Activated T-helper 2 cell treated with anti-CD3 and anti-CD28 coated beads, Interferon-gamma antibody, Interleukin-2, Interleukin-4, amounts not matched to agents 10 μg/mL and 5 μg/mL and 100 μg/mL, durations not matched to agents 14 hours and 24 hours and 36 hours (primary cell): ENCODE measurements at regions of chr15 and their contacts with region 1.

Region 1: DNA sequence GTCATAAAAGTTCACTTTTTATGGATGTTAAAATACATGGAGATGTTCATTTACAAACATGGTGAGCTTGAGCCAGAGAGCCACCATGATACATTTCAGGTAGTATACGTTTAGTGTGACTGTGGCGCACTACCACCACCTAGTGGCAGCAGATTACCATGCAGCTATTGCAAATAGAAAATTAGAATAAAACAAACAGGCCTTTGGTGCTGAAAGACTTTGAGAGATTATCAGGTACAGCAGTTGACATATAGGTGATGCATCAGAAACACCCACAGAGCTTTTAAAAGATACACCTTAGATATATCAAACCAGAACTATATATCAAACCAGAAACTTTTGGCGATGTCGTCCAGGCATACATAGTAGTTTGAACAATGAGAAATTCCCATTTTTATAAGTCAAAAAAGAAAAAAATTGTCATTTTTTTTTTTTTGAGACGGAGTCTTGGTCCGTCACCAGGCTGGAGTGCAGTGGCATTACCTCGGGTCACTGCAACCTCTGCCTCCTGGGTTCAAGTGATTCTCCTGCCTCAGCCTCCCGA is 42.0 kb upstream of the ICE2 start:
- DNase-seq: peak; percentile 65
- H3K4me3 Mint-ChIP-seq: no peak overlapping the region
- H3K27ac Mint-ChIP-seq: peak overlapping the region; percentile 55
- H3K4me1 Mint-ChIP-seq: peaks cover 31% of the 10 kb centered on the region
- H3K27me3 Mint-ChIP-seq: no peaks in the 10 kb centered on the region

Region 2: GRCh38 chr15:60195611-60196010 is 325.3 kb before region 1 on chr15:
- intact Hi-C with region 1: no loop called
- DNase-seq: no peak
- H3K4me3 Mint-ChIP-seq: no peak overlapping the region
- H3K27ac Mint-ChIP-seq: no peak overlapping the region
- H3K4me1 Mint-ChIP-seq: no peaks in the 10 kb centered on the region
- H3K27me3 Mint-ChIP-seq: peaks cover 62% of the 10 kb centered on the region

Region 3: DNA sequence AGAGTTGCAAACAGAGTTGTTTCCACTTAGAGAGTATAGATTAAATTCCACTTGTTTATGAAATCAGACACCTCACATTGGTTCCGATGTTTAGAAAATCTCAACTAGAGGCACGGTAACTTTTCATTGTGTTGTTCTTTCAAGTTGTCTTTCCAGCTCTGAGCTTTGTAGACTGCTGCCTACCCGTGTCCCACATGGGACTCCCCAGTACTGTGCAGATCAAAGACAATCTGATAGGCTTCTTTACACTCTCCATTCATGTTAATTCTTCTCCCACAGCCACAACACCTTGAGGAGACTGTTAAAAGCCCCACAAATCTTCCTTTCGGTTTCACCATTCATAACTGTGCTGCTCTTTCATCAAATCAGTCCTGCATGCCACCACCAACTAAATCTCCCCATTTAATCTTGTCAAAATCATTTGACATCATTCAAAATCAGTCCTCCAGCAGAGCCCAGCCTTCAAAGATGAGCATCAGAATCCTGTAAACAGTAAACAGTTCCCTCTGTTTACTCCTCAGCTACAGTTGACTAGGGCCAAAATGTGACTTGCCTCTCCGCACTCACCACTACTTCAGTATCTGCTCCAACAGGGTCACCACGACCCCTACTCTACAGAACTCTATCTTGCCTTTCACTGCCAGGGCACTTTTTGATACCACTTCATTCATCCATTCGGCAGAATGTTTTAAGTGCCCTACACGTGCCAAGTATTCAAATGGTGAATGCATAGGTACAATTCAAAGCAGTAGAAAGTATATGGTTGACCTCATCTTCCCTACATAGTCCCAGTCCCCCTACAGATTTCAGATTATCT is 131.4 kb before region 1 on chr15:
- intact Hi-C with region 1: loop called (anchors 2 kb)
- DNase-seq: peak; percentile 62
- H3K4me3 Mint-ChIP-seq: peak overlapping the region; percentile 26
- H3K27ac Mint-ChIP-seq: peak overlapping the region; percentile 75
- H3K4me1 Mint-ChIP-seq: peaks cover 63% of the 10 kb centered on the region
- H3K27me3 Mint-ChIP-seq: no peaks in the 10 kb centered on the region

Region 4: GRCh38 chr15:60478566-60479360 is 42.1 kb before region 1 on chr15 and contains the start of gene ICE2:
- intact Hi-C with region 1: loop called (anchors 2 kb)
- DNase-seq: peak; percentile 94
- H3K4me3 Mint-ChIP-seq: peak within 1 kb of the TSS; percentile 97
- H3K27ac Mint-ChIP-seq: peak within 1 kb of the TSS; percentile 99
- H3K4me1 Mint-ChIP-seq: peaks cover 42% of the 10 kb centered on the region
- H3K27me3 Mint-ChIP-seq: no peaks in the 10 kb centered on the region
- total RNA-seq, gene ICE2: 48.0 and 50.4 TPM in 2 replicates

Region 5: DNA sequence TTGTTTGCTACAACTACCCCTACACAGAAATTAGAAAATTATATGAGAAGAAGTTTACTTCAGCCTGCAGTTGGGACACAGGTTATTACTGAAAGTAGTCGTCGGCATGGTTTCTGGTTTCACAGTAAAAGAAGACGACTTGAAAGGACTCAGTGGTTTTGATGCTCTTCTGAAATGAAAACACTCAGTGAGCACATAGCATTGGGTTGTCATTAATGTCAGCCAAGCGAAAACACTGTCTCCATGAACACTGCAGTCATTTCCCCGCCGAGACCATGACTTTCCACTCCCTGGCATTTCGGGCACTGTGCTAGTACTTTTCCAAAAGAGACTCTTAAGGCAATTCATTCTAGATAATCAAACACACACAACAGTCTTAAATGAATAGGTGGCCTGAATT is 27.2 kb after region 1 on chr15:
- intact Hi-C with region 1: loop called (anchors 1 kb)
- DNase-seq: peak; percentile 38
- H3K4me3 Mint-ChIP-seq: peak overlapping the region; percentile 63
- H3K27ac Mint-ChIP-seq: peak overlapping the region; percentile 91
- H3K4me1 Mint-ChIP-seq: peaks cover 79% of the 10 kb centered on the region
- H3K27me3 Mint-ChIP-seq: peaks cover 2% of the 10 kb centered on the region

Region 6: DNA sequence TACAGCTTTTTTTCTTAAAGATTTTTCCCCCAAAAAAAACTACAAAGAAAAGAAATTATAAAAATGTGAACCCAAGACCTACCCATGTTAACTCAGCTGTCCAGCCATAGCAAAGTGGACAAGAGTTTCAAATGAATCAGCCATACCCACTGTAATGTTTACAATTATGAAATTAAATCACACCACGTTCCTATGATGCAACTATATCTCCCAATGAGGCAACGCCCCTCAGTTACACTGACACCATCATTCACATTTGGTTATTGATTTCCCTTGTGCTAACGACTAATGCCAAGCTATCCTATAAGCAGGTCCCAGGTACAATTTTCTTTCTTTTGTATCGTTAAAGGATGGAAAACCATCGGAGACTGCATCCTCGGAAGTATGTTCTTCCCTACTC is 73.2 kb after region 1 on chr15:
- intact Hi-C with region 1: no loop called
- DNase-seq: no peak
- H3K4me3 Mint-ChIP-seq: no peak overlapping the region
- H3K27ac Mint-ChIP-seq: no peak overlapping the region
- H3K4me1 Mint-ChIP-seq: peaks cover 29% of the 10 kb centered on the region
- H3K27me3 Mint-ChIP-seq: peaks cover 50% of the 10 kb centered on the region

Region 7: DNA sequence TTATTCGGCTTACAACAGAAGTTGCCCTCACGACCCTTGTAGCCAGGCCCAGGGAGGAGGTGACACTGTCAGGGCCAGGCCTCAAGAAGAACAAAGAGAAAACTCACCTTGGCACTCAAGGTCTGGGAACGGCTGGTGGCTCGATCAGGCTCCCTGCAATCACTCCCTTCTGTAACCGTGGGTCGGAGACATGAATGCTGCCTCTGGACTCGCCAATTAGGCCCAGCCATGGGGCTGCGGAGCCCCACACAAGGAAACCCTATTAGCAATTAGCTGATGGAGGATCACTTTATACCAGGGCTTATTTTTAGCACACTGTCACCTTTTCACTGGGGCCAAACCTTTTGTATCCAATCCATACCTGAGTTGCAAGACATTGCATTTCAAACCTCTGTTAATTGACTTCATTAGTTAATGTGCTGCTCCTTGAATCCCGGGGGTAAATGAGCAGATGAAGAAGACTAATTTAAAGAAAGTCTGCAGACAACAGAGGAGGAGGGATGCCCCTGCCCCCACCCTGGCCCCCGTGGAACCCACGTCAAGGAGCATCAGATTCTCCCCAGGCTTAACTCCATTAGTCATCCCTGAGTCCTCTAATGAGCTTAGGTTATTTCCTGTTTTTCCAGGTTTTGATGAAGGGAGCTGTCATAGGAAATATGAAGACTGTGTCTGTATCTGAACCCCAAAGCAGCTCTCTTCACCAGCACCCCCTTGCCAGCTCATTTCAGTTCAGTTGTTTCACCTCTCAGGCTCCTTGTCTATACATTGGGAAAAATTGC is 452.9 kb after region 1 on chr15:
- intact Hi-C with region 1: no loop called
- DNase-seq: no peak
- H3K4me3 Mint-ChIP-seq: no peak overlapping the region
- H3K27ac Mint-ChIP-seq: no peak overlapping the region
- H3K4me1 Mint-ChIP-seq: peaks cover 2% of the 10 kb centered on the region
- H3K27me3 Mint-ChIP-seq: peaks cover 5% of the 10 kb centered on the region